ENCODE measurements at regions of chr16 and their contacts with region 1.

Region 1: GRCh38 chr16:10172848-10173655 is 9.2 kb downstream of the GRIN2A start:
- DNase-seq: no peak

Region 2: DNA sequence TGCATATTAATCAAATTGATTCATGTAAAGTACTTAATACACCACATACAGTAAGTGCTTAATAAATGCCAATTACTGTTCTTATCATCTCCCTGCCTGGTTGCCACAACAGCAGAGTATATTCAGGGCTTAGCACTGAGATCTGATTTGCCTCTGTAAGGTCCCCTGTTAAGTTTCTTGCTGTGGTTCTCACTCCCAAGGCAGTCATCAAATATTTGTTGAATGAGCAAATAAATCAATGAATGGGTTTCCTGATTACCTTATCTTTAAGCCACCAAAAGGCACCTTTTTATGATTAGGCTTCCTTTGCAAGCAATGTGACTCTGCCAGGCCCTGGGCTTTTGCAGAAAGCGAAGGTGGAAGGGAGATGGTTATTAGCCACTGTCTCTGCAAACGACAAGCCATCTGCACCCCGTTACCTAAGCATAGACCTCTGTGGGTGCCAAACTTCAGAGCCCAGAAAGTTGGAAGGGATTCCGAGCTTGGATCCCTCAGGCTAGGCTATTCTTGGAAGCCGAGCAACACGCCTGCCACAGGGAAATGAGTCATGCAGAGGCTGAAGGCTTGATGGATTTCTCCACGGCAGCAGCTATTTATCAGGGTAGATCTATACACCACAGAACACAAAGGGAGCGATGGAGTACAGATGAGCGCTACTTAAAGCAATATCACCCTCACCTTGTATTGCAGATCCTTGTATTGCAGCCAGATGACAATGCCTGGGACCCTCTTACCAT is 92.8 kb before region 1 on chr16:
- intact Hi-C with region 1: loop called in 1 of 2 experiments (anchors 10 kb)
- DNase-seq: no peak

Region 3: GRCh38 chr16:10130538-10130937 is 42.5 kb before region 1 on chr16:
- intact Hi-C with region 1: loop called in 1 of 2 experiments (anchors 5 kb)
- DNase-seq: no peak

Measured in posterior vena cava (tissue), 2 donors.